RWPE1 (cell line): ENCODE measurements at regions of chr17 and their contacts with region 1.

Region 1: GRCh38 chr17:31842183-31843069 is 16.6 kb downstream of the COPRS start:
- DNase-seq: peak; percentile 75
- H3K27ac ChIP-seq: peak overlapping the region; percentile 37; the same call in 1 of the 2 replicates
- CTCF ChIP-seq: peak; percentile 96

Region 2: GRCh38 chr17:31533546-31534155 is 308.8 kb before region 1 on chr17:
- CTCF ChIA-PET with region 1: interaction called, 12 read pairs
- POLR2A ChIA-PET with region 1: no interaction called
- DNase-seq: peak; percentile 87
- H3K27ac ChIP-seq: peak overlapping the region; percentile 69
- CTCF ChIP-seq: peak; percentile 40

Region 3: GRCh38 chr17:31558748-31559644 is 283.4 kb before region 1 on chr17:
- CTCF ChIA-PET with region 1: interaction called, 85 read pairs
- POLR2A ChIA-PET with region 1: interaction called, 3 read pairs
- DNase-seq: peak; percentile 85
- H3K27ac ChIP-seq: peak overlapping the region; percentile 84
- CTCF ChIP-seq: peak; percentile 93

Region 4: GRCh38 chr17:31702041-31702440 is 140.4 kb before region 1 on chr17:
- CTCF ChIA-PET with region 1: interaction called, 10 read pairs
- POLR2A ChIA-PET with region 1: no interaction called
- DNase-seq: no peak
- H3K27ac ChIP-seq: no peak overlapping the region
- CTCF ChIP-seq: no peak